CD4-positive, alpha-beta memory T cell (primary cell): ENCODE measurements at regions of chr1 and their contacts with region 1.

Region 1: DNA sequence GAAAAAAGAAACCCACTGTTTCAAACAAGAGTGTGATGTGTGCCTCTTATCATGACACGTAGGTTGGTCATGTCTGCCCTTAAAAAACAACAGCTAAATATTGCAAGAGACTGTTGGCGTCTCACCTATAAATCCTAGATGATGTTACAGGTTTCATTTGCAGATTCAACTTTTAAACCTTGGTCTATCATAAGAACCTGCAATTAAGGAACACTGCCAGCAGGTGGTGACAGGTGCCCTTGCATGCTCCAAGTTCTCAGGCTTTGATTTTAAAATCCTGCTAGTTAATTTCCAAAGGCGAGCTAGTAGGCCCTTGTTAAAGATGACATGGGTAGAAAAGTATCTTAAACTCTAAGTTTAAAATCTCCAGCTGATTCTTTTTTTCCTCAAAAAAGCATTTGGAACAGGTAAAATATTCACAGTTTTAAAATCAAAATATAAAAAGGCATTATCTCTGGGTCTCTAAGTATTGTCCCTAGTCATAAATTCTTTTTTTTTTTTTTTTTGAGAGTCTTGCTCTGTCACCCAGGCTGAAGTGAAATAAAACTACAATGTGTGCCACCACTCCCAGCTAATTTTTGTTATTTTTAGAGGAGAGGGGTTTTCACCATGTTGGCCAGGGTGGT is 39.1 kb downstream of the CLSTN1 start:
- DNase-seq: peak; percentile 70 to 75 (median 72)
- H3K4me3 ChIP-seq: no peak overlapping the region
- H3K4me3 Mint-ChIP-seq: peak overlapping the region in 2 of 8 donors; percentile 29 to 61
- H3K27ac ChIP-seq: no peak overlapping the region
- H3K27ac Mint-ChIP-seq: peak overlapping the region in 5 of 7 donors; percentile 18 to 64 (median 42)
- H3K4me1 ChIP-seq: peaks cover 38% of the 10 kb centered on the region
- H3K4me1 Mint-ChIP-seq: peaks cover 22 to 42% (median 27%) of the 10 kb centered on the region in 4 donors
- H3K27me3 ChIP-seq: no peaks in the 10 kb centered on the region
- H3K27me3 Mint-ChIP-seq: no peaks in the 10 kb centered on the region

Region 2: DNA sequence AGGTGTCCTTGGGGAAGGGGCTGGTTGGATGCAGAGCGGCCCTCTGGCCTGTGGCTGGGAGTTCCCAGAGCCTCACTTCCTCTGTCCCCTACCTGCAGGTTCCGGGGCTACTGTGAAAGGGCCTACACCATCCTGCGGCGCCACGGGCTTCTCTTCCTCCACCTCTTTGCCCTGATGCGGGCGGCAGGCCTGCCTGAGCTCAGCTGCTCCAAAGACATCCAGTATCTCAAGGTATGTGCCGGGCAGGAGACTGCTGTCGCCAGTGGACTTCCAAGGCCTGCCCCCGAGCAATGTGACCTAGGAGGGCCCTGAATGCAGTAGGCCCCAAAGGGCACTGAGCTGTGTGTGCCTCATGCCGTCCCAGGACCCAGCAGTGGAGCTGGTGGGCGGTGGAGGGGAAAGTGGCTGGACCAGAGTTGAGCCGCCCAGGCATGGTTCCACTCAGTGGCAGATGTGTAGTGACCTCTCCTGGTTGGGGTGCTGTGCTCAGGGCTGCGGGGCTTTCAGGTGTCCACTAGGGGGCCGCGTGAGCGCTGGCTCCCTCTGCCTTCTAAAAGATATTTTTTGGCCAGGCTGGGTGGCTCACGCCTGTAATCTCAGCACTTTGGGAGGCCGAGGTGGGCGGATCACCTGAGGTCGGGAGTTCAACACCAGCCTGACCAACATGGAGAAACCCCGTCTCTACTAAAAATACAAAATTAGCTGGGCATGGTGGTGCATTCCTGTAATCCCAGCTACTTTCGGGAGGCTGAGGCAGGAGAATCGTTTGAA is 59.7 kb before region 1 on chr1:
- CTCF ChIA-PET with region 1: interaction called, 3 read pairs
- POLR2A ChIA-PET with region 1: no interaction called
- intact Hi-C with region 1: loop called (anchors 1 kb)
- DNase-seq: peak; percentile 66 to 71 (median 69)
- H3K4me3 ChIP-seq: no peak overlapping the region
- H3K4me3 Mint-ChIP-seq: peak overlapping the region in 2 of 8 donors; percentile 7 to 68
- H3K27ac ChIP-seq: no peak overlapping the region
- H3K27ac Mint-ChIP-seq: peak overlapping the region; percentile 57 to 93 (median 78)
- H3K4me1 ChIP-seq: peaks cover 84% of the 10 kb centered on the region
- H3K4me1 Mint-ChIP-seq: peaks cover 26 to 80% (median 48%) of the 10 kb centered on the region in 4 donors
- H3K27me3 ChIP-seq: no peaks in the 10 kb centered on the region
- H3K27me3 Mint-ChIP-seq: no peaks in the 10 kb centered on the region

Region 3: DNA sequence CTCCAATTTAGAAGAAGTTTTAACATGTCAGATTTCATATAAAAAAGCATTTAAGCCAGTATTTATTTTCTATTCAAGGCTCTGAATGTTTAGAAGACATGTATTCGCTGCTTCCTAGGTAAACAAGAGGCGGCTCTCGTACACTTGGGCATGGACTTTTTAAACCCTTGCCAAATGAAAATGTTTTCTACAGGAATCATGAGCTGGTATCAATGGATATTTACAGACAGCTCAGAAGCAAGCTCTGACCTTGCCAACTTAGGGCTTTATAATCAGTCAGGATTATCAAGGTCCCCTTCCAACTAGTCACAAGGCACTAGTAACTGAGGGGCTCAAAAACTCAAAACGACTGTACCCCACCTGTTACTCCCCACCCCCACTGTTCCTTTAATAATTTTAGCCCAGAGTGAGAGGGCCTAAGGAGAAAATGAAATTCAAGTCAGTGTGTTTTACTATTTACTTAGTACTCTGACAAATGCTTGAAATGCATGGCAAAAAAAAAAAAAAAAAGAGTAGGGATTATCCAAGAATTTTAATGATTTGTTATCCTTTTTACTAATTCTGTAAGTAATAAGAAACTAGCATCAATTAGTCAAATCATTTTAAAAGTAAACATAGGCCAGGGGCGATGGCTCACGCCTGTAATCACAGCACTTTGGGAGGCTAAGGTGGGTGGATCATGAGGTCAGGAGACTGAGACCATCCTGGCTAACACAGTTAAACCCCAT is 26.8 kb after region 1 on chr1:
- CTCF ChIA-PET with region 1: interaction called, 12 read pairs
- POLR2A ChIA-PET with region 1: interaction called, 4 read pairs
- intact Hi-C with region 1: no loop called
- DNase-seq: no peak
- H3K4me3 ChIP-seq: no peak overlapping the region
- H3K4me3 Mint-ChIP-seq: no peak overlapping the region
- H3K27ac ChIP-seq: no peak overlapping the region
- H3K27ac Mint-ChIP-seq: peak overlapping the region in 1 of 7 donors; percentile 22
- H3K4me1 ChIP-seq: peaks cover 44% of the 10 kb centered on the region
- H3K4me1 Mint-ChIP-seq: peaks cover 38 to 73% (median 50%) of the 10 kb centered on the region in 4 donors
- H3K27me3 ChIP-seq: no peaks in the 10 kb centered on the region
- H3K27me3 Mint-ChIP-seq: no peaks in the 10 kb centered on the region

Region 4: DNA sequence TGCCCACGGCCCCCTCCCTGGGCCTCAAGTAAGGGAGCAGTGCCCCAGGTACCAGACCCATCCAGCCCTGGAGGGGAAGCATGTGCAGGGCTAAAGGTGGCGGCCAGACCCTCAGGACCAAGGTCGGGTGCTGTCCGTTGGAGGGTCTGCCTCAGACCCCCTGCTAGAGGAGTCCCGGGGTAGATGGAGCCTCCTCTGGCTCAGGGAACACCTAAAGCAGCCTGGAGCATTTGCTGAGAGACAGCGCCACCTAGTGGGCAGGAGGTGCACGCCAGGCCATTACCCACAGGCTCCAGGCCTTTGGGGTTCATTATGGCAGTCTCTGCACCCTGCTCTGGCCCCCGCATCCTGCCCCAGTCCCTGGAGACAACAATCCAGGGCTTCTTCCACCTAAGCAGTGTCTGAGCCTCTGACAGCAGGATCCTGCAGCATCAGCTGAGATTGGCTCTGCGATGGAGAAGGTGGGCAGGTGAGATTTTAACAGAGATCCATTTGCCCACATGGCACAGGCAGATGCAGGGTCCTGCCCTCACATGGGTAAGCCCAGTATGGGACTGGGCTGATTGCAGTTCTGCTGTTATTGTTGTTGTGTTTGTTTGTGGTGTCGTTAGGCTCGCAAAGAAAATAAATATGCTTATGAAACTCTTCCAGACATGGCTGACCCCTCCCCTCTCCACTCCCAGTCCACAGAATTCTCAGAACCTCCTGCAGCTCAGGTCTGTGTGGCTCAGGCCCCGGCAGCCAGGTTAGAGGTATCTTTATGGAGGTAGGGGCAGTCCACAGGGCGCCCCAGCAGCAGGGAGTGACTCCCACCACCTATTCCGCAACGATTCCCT is 83.0 kb after region 1 on chr1:
- CTCF ChIA-PET with region 1: interaction called, 381 read pairs
- POLR2A ChIA-PET with region 1: interaction called, 3 read pairs
- intact Hi-C with region 1: loop called (anchors 1 kb)
- DNase-seq: peak; percentile 81 to 86 (median 81)
- H3K4me3 ChIP-seq: no peak overlapping the region
- H3K4me3 Mint-ChIP-seq: no peak overlapping the region
- H3K27ac ChIP-seq: no peak overlapping the region
- H3K27ac Mint-ChIP-seq: peak overlapping the region in 1 of 7 donors; percentile 6
- H3K4me1 ChIP-seq: peaks cover 6% of the 10 kb centered on the region
- H3K4me1 Mint-ChIP-seq: peaks cover 0 to 4% (median 0%) of the 10 kb centered on the region in 4 donors
- H3K27me3 ChIP-seq: no peaks in the 10 kb centered on the region
- H3K27me3 Mint-ChIP-seq: no peaks in the 10 kb centered on the region

Region 5: DNA sequence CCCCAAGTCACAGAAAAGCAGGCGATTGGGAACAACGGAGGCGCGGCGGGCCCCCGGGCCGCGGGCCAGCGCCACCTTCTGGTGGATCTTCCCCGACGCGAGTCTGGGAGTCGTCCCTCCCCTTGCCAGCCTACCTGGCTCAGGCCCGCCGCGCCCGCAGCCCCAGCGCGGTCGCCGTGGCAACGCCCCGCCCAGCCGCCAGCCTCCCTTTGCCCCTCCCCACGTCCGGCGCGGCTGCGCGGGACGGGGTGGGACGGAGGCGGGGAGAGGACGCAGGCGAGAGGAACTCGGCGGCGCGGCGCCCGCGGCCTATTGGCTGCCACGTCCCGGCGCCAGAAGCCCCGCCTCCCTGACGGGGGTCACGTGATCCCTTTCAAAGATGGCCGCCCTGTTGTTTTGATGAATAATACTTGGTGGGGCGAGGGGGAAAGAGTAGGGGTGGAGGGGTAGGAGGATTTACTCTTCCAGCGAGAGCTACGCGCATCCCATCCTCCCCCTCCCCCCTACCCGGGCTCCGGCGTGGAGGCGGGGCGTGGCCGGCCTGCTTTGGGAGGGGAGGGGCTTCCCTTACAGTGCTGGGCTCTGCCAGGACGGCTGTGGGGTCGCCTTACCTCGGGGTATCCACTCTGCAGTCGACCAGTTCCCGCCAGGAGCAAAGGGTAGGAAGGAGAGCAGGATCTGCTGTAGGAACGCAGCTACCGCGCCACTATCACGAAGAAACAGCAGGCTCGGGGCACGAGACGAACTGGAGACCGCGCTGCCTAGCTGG is 248.2 kb after region 1 on chr1 and contains the start of gene UBE4B:
- CTCF ChIA-PET with region 1: no interaction called
- POLR2A ChIA-PET with region 1: no interaction called
- intact Hi-C with region 1: loop called (anchors 10 kb)
- DNase-seq: peak; percentile 99 to 100 (median 99)
- H3K4me3 ChIP-seq: peak within 1 kb of the TSS; percentile 92 to 96
- H3K4me3 Mint-ChIP-seq: peak within 1 kb of the TSS; percentile 93 to 98 (median 95)
- H3K27ac ChIP-seq: peak within 1 kb of the TSS; percentile 84
- H3K27ac Mint-ChIP-seq: peak within 1 kb of the TSS; percentile 92 to 98 (median 97)
- H3K4me1 ChIP-seq: peaks cover 22% of the 10 kb centered on the region
- H3K4me1 Mint-ChIP-seq: peaks cover 15 to 32% (median 25%) of the 10 kb centered on the region in 4 donors
- H3K27me3 ChIP-seq: no peaks in the 10 kb centered on the region
- H3K27me3 Mint-ChIP-seq: peaks cover 0 to 1% of the 10 kb centered on the region in 2 donors
- total RNA-seq, gene UBE4B: 44.1 to 47.6 TPM